HAP-1 (cell line): ENCODE measurements at regions of chr9 and their contacts with region 1.

Region 1: DNA sequence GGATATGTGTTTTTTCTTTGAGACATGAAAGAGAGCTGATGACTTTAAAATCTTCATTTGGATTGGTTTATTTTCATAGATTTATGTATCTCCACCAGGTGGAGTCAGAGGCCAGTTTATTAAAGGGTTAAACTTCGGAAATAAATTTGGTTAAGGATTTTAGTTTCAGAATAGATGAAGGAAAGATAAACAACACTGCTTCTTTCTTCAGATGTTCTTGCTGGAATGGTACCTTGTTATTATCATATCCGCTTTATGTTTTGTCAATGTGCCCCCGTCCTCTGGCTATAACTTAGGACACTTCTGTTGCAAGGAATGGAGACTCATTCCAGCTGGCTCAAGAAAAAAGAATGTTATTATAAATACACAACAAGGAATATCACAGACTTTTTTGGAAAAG is 81.2 kb downstream of the ALDH1A1 start:
- DNase-seq: peak in 1 of 2 experiments; percentile 39
- H3K4me3 ChIP-seq: no peak overlapping the region
- H3K4me1 ChIP-seq: peaks cover 3% of the 10 kb centered on the region; the same call in 1 of the 2 replicates
- H3K27me3 ChIP-seq: no peaks in the 10 kb centered on the region

Region 2: DNA sequence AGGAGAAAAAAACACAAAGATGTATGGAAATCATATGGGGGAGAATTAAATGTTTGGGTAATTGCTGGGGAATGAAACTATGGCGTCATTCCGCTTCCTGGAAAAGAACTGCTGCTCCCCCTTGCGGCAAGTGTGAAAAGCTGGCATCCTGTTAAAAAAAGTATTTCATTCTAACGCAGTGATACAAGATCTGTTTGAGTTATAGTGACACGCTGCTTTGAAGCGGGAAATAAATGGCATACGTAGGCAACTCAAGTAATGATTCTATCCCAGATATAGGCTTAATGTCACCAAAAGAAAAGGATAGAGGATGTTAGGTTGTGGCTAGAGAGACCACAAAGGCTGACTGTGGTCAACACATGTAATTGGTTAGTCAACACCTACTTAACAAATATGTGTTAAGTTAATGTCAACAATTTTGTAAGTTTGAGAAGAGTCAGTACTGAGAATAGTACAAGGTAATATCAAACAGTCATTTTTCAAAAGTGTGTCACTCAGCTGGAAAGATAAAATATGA is 151.4 kb after region 1 on chr9:
- in situ Hi-C with region 1: loop called (anchors 10 kb)
- DNase-seq: peak; percentile 63 to 75
- H3K4me3 ChIP-seq: no peak overlapping the region
- H3K4me1 ChIP-seq: no peaks in the 10 kb centered on the region
- H3K27me3 ChIP-seq: no peaks in the 10 kb centered on the region; the same call in 1 of the 2 replicates

Region 3: GRCh38 chr9:73081979-73082657 is 210.4 kb after region 1 on chr9:
- in situ Hi-C with region 1: loop called (anchors 10 kb)
- DNase-seq: peak; percentile 35 to 70
- H3K4me3 ChIP-seq: no peak overlapping the region
- H3K4me1 ChIP-seq: no peaks in the 10 kb centered on the region
- H3K27me3 ChIP-seq: 0 out of 2 replicates have a peak, but pooled peaks cover 3% of the 10 kb centered on the region

Region 4: DNA sequence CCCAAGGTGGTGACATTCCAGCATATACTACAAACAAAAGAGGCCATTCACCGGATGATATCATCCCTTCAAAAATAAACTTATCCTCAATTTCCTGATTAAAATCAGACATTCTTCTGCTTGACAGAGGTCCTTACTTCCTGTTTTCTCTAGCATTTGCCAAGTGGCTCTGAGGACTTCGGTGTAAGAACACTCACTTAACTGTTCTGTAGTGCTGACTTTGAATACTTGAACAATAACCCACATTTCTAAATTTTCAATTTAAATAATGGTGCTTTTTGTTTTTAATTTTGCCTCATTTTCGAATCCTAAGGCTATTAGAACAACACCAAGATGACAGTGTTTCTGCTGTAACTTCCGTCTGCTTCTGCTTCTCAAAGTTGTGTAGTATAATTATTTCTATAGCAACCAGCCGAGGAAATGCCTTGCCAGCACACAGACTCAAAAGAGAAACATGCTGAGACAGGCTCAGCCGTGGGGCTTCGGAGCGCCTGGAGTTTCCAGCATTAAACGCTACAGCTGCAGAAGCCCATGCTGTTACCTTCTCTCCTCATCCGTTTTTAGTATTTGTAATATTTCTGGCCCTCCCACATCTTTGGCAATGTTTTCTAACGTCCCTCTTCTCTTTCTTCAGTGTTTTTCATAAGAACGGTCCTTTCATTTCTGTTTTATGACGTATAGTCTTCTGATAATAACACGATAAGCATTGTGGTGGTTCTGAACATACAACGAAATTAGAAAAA is 260.5 kb after region 1 on chr9:
- in situ Hi-C with region 1: no loop called
- DNase-seq: peak; percentile 72 to 77
- H3K4me3 ChIP-seq: peak overlapping the region; percentile 24
- H3K4me1 ChIP-seq: peaks cover 27% of the 10 kb centered on the region
- H3K27me3 ChIP-seq: no peaks in the 10 kb centered on the region